Activated CD8-positive, alpha-beta T cell treated with anti-CD3 and anti-CD28 coated beads for 36 hours (primary cell): ENCODE measurements at regions of chr1 and their contacts with region 1.

Region 1: GRCh38 chr1:43414634-43415223 is 25.0 kb downstream of the SZT2 start:
- DNase-seq: peak; percentile 87
- ATAC-seq: peak; percentile 98
- H3K4me3 Mint-ChIP-seq: no peak overlapping the region
- H3K27ac Mint-ChIP-seq: no peak overlapping the region
- H3K4me1 Mint-ChIP-seq: no peaks in the 10 kb centered on the region
- H3K27me3 Mint-ChIP-seq: no peaks in the 10 kb centered on the region
- CTCF ChIP-seq: peak; percentile 51

Region 2: GRCh38 chr1:43227143-43227764 is 187.5 kb before region 1 on chr1:
- CTCF ChIA-PET with region 1: interaction called, 73 read pairs
- POLR2A ChIA-PET with region 1: interaction called, 3 read pairs
- intact Hi-C with region 1: loop called (anchors 1 kb)
- DNase-seq: peak; percentile 93
- ATAC-seq: peak; percentile 93
- H3K4me3 Mint-ChIP-seq: no peak overlapping the region
- H3K27ac Mint-ChIP-seq: no peak overlapping the region
- H3K4me1 Mint-ChIP-seq: no peaks in the 10 kb centered on the region
- H3K27me3 Mint-ChIP-seq: no peaks in the 10 kb centered on the region
- CTCF ChIP-seq: peak; percentile 83

Region 3: GRCh38 chr1:43238085-43238484 is 176.6 kb before region 1 on chr1:
- CTCF ChIA-PET with region 1: interaction called, 28 read pairs
- POLR2A ChIA-PET with region 1: interaction called, 3 read pairs
- intact Hi-C with region 1: no loop called
- DNase-seq: peak; percentile 73
- ATAC-seq: peak; percentile 64
- H3K4me3 Mint-ChIP-seq: no peak overlapping the region
- H3K27ac Mint-ChIP-seq: no peak overlapping the region
- H3K4me1 Mint-ChIP-seq: no peaks in the 10 kb centered on the region
- H3K27me3 Mint-ChIP-seq: no peaks in the 10 kb centered on the region
- CTCF ChIP-seq: peak; percentile 52

Region 4: DNA sequence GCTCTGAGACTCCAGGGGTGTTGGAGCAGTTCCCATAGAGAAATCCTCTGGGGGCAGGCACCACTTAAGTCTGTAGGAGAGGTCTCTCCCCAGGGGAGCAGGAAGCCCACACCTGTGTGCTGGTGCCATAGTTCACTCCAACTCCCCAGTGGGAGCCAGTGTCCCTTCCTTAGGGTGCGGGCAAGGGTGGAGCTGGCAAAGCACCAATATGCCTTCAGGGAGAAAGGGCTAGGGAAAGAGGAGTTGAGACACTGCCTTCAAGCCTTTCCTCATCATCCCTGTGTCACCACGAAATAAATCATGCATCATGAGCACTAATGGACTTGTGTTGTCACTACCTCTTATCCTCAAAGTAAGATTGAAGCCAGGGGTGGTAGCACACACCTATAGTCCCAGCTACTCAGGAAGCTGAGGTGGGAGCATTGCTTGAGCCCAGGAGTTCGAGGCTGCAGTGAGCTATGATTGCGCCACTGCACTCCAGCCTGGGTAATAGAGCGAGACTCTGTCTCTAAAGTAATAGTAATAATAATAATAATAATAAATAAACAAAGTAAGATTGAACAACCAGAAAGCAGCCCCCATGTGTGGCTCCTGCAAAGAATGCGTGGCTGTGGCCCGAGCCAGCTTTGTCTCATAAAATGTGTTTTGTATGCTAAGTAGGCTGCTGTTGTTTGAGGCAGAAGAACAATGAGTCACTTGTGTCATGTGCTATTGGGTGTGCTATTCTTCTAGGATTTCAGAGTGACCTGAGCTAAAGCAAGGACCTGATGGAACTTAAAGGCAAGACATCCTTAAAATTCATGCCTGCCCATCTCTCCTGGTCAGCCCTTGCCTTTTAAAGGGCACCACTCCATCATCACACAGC is 120.6 kb before region 1 on chr1:
- CTCF ChIA-PET with region 1: interaction called, 10 read pairs
- POLR2A ChIA-PET with region 1: no interaction called
- intact Hi-C with region 1: no loop called
- DNase-seq: no peak
- ATAC-seq: no peak
- H3K4me3 Mint-ChIP-seq: no peak overlapping the region
- H3K27ac Mint-ChIP-seq: peak overlapping the region; percentile 19
- H3K4me1 Mint-ChIP-seq: peaks cover 14% of the 10 kb centered on the region
- H3K27me3 Mint-ChIP-seq: no peaks in the 10 kb centered on the region
- CTCF ChIP-seq: no peak

Region 5: DNA sequence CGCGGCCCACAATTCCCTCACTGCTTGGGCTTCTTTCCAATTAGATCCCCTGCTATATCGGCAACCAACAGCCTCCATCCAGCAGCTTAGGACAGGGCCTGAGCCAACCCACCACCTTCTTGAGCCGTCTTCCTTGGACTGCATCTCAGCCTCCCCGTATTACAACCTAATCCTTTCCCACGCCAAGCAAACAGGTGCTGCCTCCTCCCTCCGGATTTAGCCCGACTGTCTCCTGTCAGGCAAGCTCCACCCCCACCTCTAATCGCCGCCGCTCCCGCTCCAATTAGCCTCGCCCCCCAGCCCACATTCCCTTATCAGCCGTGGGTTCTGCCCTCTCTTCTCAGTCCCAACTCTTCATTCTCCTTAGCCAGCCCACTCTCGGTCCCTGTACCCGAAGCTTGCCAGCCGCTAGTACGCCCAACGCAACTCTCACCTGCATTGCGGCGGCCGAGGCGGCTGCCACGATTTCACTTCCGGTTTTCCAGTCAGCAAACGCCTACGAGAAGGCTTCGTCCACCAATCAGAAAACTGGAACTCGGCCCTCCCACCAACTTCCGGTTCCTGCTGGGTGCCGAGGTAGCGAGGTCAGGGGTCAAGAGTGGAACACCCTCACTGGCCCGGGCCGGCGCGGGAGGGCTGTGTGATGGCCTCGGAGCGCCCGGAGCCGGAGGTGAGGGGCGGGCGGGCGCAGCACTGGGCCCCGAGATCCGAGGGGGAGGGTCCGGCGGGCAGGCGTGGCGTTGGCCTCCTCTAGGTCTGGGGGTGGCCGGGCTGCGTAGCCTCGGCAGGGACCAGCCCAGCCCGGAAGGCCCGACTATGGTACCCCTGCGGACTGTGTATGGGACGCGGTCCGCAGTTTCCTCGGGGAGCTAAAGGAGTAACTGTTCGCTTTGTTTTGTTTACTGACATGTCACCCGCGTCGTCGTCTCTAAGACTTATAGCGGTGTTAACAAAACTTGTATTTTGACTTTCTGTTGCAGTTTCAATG is 25.1 kb before region 1 on chr1 and contains the starts of genes MED8 and SZT2:
- CTCF ChIA-PET with region 1: interaction called, 11 read pairs
- POLR2A ChIA-PET with region 1: interaction called, 5 read pairs
- intact Hi-C with region 1: no loop called
- DNase-seq: peak; percentile 95
- ATAC-seq: peak; percentile 98
- H3K4me3 Mint-ChIP-seq: peak within 1 kb of the TSS; percentile 95
- H3K27ac Mint-ChIP-seq: peak within 1 kb of the TSS; percentile 96
- H3K4me1 Mint-ChIP-seq: peaks cover 34% of the 10 kb centered on the region
- H3K27me3 Mint-ChIP-seq: no peaks in the 10 kb centered on the region
- CTCF ChIP-seq: no peak
- total RNA-seq, gene MED8: 33.5 to 34.5 TPM
- total RNA-seq, gene SZT2: 30.1 to 33.3 TPM